A673 (cell line): ENCODE measurements at regions of chr5 and their contacts with region 1.

Region 1: GRCh38 chr5:26700759-26701384 is 337.5 kb downstream of the CDH9 start:
- DNase-seq: peak; percentile 68
- H3K4me3 ChIP-seq: no peak overlapping the region
- H3K27ac ChIP-seq: no peak overlapping the region
- H3K4me1 ChIP-seq: no peaks in the 10 kb centered on the region
- H3K27me3 ChIP-seq: no peaks in the 10 kb centered on the region
- CTCF ChIP-seq: peak; percentile 74

Region 2: DNA sequence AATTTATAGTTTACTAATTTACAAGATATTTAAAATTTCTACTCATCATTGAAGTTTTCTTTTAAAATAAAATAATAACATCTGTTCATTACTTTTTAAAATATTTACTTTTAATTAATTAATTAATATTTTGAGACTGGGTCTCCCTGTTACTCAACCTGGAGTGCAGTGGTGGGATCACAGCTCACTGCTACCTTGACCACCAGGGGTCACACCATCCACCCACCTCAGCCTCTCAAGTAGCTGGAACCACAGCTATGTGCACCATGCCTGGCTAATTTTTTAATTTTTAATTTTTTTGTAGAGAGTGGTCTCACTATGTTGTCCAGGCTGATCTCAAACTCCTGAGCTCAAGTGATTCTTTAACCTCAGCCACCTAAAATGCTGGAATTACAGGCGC is 676.1 kb before region 1 on chr5:
- CTCF ChIA-PET with region 1: no interaction called
- POLR2A ChIA-PET with region 1: no interaction called
- intact Hi-C with region 1: loop called (anchors 10 kb)
- DNase-seq: no peak
- H3K4me3 ChIP-seq: no peak overlapping the region
- H3K27ac ChIP-seq: no peak overlapping the region
- H3K4me1 ChIP-seq: no peaks in the 10 kb centered on the region
- H3K27me3 ChIP-seq: no peaks in the 10 kb centered on the region
- CTCF ChIP-seq: peak; percentile 37; the same call in 1 of the 2 replicates

Region 3: GRCh38 chr5:26121338-26121737 is 579.5 kb before region 1 on chr5:
- CTCF ChIA-PET with region 1: interaction called, 4 read pairs
- POLR2A ChIA-PET with region 1: no interaction called
- intact Hi-C with region 1: loop called (anchors 2 kb)
- DNase-seq: peak; percentile 44
- H3K4me3 ChIP-seq: no peak overlapping the region
- H3K27ac ChIP-seq: no peak overlapping the region
- H3K4me1 ChIP-seq: no peaks in the 10 kb centered on the region
- H3K27me3 ChIP-seq: no peaks in the 10 kb centered on the region
- CTCF ChIP-seq: peak; percentile 44; the same call in 1 of the 2 replicates

Region 4: DNA sequence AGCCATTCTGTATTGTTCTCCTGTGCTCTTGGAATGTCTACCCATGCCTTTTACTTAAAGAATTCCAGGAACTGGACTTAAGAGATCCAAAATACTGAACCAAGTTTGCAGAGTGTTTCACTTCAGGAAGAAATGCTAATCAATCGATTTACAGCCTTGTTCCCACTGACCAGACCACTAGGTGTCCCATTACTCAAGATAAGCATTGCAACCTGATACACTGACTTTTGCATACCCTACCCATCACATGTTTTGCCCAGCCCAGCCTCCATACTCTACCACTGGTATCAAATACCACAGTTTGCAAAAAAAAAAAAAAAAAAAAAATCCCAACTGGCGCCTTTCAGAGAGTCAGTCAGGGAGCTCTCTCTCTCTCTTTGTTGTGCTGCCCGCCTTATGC is 213.3 kb before region 1 on chr5:
- CTCF ChIA-PET with region 1: interaction called, 8 read pairs
- POLR2A ChIA-PET with region 1: no interaction called
- intact Hi-C with region 1: loop called (anchors 5 kb)
- DNase-seq: no peak
- H3K4me3 ChIP-seq: no peak overlapping the region
- H3K27ac ChIP-seq: no peak overlapping the region
- H3K4me1 ChIP-seq: no peaks in the 10 kb centered on the region
- H3K27me3 ChIP-seq: no peaks in the 10 kb centered on the region
- CTCF ChIP-seq: 0 out of 2 replicates have a peak, but pooled peaks have one; percentile 17